ENCODE measurements at regions of chr1 and their contacts with region 1.

Region 1: GRCh38 chr1:201481761-201482493 is 12.9 kb upstream of the PHLDA3 start:
- DNase-seq: peak; percentile 52 to 86
- H3K4me3 ChIP-seq: no peak overlapping the region
- H3K27ac ChIP-seq: no peak overlapping the region
- H3K4me1 ChIP-seq: peaks cover 30% of the 10 kb centered on the region
- H3K27me3 ChIP-seq: no peaks in the 10 kb centered on the region
- CTCF ChIP-seq: peak; percentile 86

Region 2: DNA sequence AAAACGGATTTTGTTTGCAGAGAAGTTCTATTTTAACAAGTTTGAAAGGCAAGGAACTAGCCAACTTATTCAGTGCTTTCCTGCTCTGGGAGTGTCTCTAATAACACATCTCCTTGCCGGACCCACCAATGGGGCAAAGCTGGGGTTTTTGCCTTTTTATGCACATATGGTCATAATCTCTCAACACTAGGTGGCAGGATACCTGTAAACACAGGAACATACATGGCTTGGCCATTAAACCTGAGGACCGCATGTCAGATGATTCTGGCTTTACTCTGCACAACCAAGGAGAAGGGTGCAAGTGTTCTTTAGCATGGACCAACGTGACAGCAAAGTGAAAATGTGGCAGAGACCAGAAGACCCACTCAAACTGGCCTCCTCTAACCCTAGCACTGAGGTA is 332.5 kb before region 1 on chr1:
- CTCF ChIA-PET with region 1: no interaction called
- POLR2A ChIA-PET with region 1: no interaction called
- intact Hi-C with region 1: no loop called
- DNase-seq: peak in 1 of 2 experiments; percentile 47
- H3K4me3 ChIP-seq: no peak overlapping the region
- H3K27ac ChIP-seq: no peak overlapping the region
- H3K4me1 ChIP-seq: 0 out of 2 replicates have a peak, but pooled peaks cover 6% of the 10 kb centered on the region
- H3K27me3 ChIP-seq: no peaks in the 10 kb centered on the region
- CTCF ChIP-seq: peak; percentile 70

Region 3: DNA sequence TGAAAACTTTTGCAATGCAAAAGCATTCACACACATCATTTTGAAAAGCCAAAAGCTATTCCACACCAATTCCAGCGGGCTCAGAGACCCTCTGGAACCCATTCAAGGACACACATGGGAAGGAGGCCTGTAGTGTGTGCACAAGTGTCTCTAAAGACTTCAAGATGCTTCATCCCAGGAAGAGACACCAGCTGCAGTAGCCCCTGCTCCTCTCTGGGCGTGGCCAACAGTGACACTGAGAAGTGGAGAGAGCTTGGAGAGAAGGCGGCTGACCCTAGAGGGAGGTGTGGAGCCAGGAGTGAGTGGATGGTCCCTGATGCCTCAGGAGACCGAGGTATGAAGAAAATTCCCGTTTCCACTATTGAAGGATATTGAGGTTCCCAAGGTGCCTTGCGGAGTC is 45.5 kb before region 1 on chr1:
- CTCF ChIA-PET with region 1: interaction called, 20 read pairs
- POLR2A ChIA-PET with region 1: interaction called, 4 read pairs
- intact Hi-C with region 1: loop called (anchors 2 kb)
- DNase-seq: no peak
- H3K4me3 ChIP-seq: no peak overlapping the region
- H3K27ac ChIP-seq: no peak overlapping the region
- H3K4me1 ChIP-seq: peaks cover 19% of the 10 kb centered on the region
- H3K27me3 ChIP-seq: no peaks in the 10 kb centered on the region
- CTCF ChIP-seq: no peak

Region 4: DNA sequence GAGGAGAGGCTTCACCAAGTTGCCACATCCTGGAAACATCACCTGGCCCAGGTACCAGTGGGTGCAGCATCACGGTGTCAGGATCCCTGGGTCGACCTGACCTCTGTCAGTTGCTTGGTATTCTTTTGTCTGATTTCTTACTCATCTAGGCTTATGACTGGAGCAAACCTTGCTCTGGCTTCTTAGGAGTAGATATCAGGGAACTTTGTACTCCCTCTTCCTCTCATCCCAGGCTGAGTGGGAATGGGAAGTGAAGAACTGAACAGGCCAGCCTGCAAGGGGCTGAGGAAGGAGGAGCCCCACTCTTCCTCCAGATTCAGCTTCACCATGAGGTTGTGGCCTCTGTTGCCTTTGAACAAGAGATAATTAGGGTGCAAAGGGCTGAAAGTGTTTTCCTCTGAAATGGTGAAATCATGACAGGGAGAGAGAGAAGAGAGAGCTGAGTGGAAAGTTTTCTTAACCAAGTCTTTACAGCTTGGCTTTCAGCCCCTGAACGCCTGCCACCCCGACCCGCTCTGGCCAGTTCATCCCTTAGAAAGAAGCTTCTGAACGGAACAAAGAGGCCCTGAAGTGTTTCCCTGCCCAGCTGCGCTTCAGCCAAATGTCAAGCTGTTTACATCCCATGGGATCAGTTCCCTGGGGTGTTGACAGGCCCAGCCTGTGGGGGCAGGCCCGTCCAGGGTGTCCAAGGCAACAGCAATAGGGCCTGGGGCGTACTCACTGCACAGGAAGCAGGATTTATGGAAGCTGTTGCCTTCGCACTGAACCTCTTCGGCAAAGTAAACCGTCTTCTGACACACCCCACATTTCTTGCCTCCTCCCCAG is 13.8 kb after region 1 on chr1:
- CTCF ChIA-PET with region 1: interaction called, 3 read pairs
- POLR2A ChIA-PET with region 1: interaction called, 10 read pairs
- intact Hi-C with region 1: no loop called
- DNase-seq: no peak
- H3K4me3 ChIP-seq: no peak overlapping the region
- H3K27ac ChIP-seq: no peak overlapping the region
- H3K4me1 ChIP-seq: peaks cover 2% of the 10 kb centered on the region
- H3K27me3 ChIP-seq: no peaks in the 10 kb centered on the region
- CTCF ChIP-seq: no peak

Region 5: GRCh38 chr1:201530741-201531531 is 49.0 kb after region 1 on chr1:
- CTCF ChIA-PET with region 1: no interaction called
- POLR2A ChIA-PET with region 1: no interaction called
- intact Hi-C with region 1: loop called (anchors 1 kb)
- DNase-seq: peak; percentile 48 to 78
- H3K4me3 ChIP-seq: no peak overlapping the region
- H3K27ac ChIP-seq: no peak overlapping the region
- H3K4me1 ChIP-seq: peaks cover 16% of the 10 kb centered on the region
- H3K27me3 ChIP-seq: no peaks in the 10 kb centered on the region
- CTCF ChIP-seq: peak; percentile 77

Region 6: GRCh38 chr1:201703621-201704439 is 221.9 kb after region 1 on chr1:
- CTCF ChIA-PET with region 1: no interaction called
- POLR2A ChIA-PET with region 1: no interaction called
- intact Hi-C with region 1: loop called (anchors 1 kb)
- DNase-seq: peak; percentile 66 to 83
- H3K4me3 ChIP-seq: no peak overlapping the region
- H3K27ac ChIP-seq: no peak overlapping the region
- H3K4me1 ChIP-seq: no peaks in the 10 kb centered on the region
- H3K27me3 ChIP-seq: no peaks in the 10 kb centered on the region
- CTCF ChIP-seq: peak; percentile 96

Measured in PC-9 (cell line).